Activated B cell treated with CpG ODN at 0.5 μM for 24 hours (primary cell): ENCODE measurements at regions of chr6 and their contacts with region 1.

Region 1: DNA sequence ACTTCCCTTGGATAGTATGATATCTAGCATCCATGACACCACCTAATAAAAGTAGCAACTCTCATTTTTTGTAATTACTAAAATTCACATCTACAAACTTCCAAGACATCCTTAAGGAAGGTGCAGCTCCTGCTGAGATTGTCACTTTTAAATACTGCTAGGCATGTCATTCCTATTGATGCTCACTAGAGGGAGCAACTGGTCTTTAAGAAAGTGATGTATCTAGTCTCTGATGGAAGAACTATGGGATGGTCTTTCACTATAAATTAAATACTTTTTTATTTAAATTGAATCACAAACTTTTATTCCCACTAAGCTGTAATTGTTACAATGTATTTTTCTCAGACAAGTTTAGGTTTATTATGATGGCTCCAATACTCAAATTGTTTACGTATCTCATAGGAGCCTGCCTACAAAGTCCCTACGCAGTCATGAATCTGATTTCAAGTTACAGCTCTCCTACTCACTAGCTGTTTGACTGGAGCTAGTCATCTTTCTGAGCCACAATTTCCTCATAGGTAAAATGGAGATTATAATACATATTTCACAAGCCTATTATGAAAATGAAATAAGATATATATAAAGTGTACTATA is 8.1 kb upstream of the TSPYL1 start:
- DNase-seq: no peak
- ATAC-seq: peak; percentile 88
- H3K4me3 Mint-ChIP-seq: no peak overlapping the region
- H3K27ac Mint-ChIP-seq: no peak overlapping the region
- H3K4me1 Mint-ChIP-seq: peaks cover 5% of the 10 kb centered on the region
- H3K27me3 Mint-ChIP-seq: no peaks in the 10 kb centered on the region
- CTCF ChIP-seq: peak; percentile 98

Region 2: GRCh38 chr6:116268589-116269293 is 19.0 kb before region 1 on chr6:
- CTCF ChIA-PET with region 1: interaction called, 16 read pairs
- POLR2A ChIA-PET with region 1: no interaction called
- intact Hi-C with region 1: no loop called
- DNase-seq: no peak
- ATAC-seq: peak; percentile 91
- H3K4me3 Mint-ChIP-seq: no peak overlapping the region
- H3K27ac Mint-ChIP-seq: no peak overlapping the region
- H3K4me1 Mint-ChIP-seq: peaks cover 17% of the 10 kb centered on the region
- H3K27me3 Mint-ChIP-seq: no peaks in the 10 kb centered on the region
- CTCF ChIP-seq: peak; percentile 28

Region 3: GRCh38 chr6:116314878-116315277 is 27.1 kb after region 1 on chr6:
- CTCF ChIA-PET with region 1: interaction called, 10 read pairs
- POLR2A ChIA-PET with region 1: no interaction called
- intact Hi-C with region 1: no loop called
- DNase-seq: no peak
- ATAC-seq: peak; percentile 82
- H3K4me3 Mint-ChIP-seq: no peak overlapping the region
- H3K27ac Mint-ChIP-seq: peak overlapping the region; percentile 72
- H3K4me1 Mint-ChIP-seq: peaks cover 24% of the 10 kb centered on the region
- H3K27me3 Mint-ChIP-seq: no peaks in the 10 kb centered on the region
- CTCF ChIP-seq: no peak

Region 4: GRCh38 chr6:116444092-116444491 is 156.3 kb after region 1 on chr6:
- CTCF ChIA-PET with region 1: interaction called, 33 read pairs
- POLR2A ChIA-PET with region 1: interaction called, 4 read pairs
- intact Hi-C with region 1: loop called (anchors 1 kb)
- DNase-seq: no peak
- ATAC-seq: peak; percentile 78
- H3K4me3 Mint-ChIP-seq: no peak overlapping the region
- H3K27ac Mint-ChIP-seq: no peak overlapping the region
- H3K4me1 Mint-ChIP-seq: peaks cover 26% of the 10 kb centered on the region
- H3K27me3 Mint-ChIP-seq: no peaks in the 10 kb centered on the region
- CTCF ChIP-seq: no peak

Region 5: DNA sequence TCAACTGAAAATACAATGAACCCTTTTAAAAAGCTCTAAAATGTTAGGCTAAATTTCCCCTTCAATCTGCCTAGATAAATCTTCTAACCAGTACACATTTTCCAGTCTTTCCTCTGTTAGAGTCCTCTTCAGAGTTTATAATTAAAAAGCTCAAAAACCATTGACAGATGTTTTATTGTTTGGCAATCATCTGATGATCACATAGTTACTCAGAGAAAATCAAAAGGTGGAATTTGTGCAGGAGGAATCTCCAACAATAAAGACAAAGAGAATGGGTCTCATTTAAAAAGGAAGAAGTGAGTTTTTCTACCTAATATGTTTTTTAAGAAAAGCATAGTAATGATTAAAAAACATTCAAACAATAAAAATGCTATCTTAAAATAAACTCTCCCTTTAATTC is 254.6 kb after region 1 on chr6:
- CTCF ChIA-PET with region 1: interaction called, 37 read pairs
- POLR2A ChIA-PET with region 1: no interaction called
- intact Hi-C with region 1: no loop called
- DNase-seq: no peak
- ATAC-seq: no peak
- H3K4me3 Mint-ChIP-seq: no peak overlapping the region
- H3K27ac Mint-ChIP-seq: no peak overlapping the region
- H3K4me1 Mint-ChIP-seq: no peaks in the 10 kb centered on the region
- H3K27me3 Mint-ChIP-seq: peaks cover 18% of the 10 kb centered on the region
- CTCF ChIP-seq: no peak

Region 6: DNA sequence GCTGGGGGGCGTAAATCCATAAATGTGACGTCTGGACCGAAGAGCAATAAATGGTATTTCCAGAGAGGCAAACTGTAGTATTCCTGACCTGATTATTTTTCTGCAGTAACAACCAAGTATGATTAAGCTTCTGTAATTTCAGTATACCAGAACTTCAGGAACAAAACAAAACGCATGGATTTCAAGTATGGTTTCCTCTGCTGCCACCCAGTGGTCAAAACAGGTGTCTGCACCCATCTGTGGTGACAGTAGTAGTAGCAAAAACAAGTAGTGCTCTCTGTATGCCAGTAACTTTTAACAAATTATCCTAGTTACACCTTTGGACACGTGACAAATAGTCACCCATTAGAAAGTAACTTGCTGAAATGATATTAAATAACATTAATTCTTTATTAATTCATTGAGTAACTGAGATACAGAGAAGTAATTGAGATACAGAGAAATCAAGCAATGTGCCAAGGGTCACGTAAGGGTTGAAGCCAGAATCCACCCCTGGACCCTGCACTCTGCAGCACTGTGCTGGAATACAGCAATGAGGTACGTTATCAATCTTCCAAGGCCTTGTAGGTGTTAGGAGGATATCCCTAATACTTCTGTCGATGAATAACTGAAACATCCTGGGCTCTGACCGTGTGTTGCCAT is 273.7 kb after region 1 on chr6:
- CTCF ChIA-PET with region 1: interaction called, 21 read pairs
- POLR2A ChIA-PET with region 1: no interaction called
- intact Hi-C with region 1: loop called (anchors 1 kb)
- DNase-seq: peak; percentile 37
- ATAC-seq: peak; percentile 81
- H3K4me3 Mint-ChIP-seq: no peak overlapping the region
- H3K27ac Mint-ChIP-seq: no peak overlapping the region
- H3K4me1 Mint-ChIP-seq: peaks cover 2% of the 10 kb centered on the region
- H3K27me3 Mint-ChIP-seq: peaks cover 14% of the 10 kb centered on the region
- CTCF ChIP-seq: peak; percentile 50

Region 7: GRCh38 chr6:116648156-116648555 is 360.4 kb after region 1 on chr6:
- CTCF ChIA-PET with region 1: no interaction called
- POLR2A ChIA-PET with region 1: no interaction called
- intact Hi-C with region 1: loop called (anchors 5 kb)
- DNase-seq: no peak
- ATAC-seq: no peak
- H3K4me3 Mint-ChIP-seq: no peak overlapping the region
- H3K27ac Mint-ChIP-seq: no peak overlapping the region
- H3K4me1 Mint-ChIP-seq: peaks cover 2% of the 10 kb centered on the region
- H3K27me3 Mint-ChIP-seq: no peaks in the 10 kb centered on the region
- CTCF ChIP-seq: no peak

Region 8: DNA sequence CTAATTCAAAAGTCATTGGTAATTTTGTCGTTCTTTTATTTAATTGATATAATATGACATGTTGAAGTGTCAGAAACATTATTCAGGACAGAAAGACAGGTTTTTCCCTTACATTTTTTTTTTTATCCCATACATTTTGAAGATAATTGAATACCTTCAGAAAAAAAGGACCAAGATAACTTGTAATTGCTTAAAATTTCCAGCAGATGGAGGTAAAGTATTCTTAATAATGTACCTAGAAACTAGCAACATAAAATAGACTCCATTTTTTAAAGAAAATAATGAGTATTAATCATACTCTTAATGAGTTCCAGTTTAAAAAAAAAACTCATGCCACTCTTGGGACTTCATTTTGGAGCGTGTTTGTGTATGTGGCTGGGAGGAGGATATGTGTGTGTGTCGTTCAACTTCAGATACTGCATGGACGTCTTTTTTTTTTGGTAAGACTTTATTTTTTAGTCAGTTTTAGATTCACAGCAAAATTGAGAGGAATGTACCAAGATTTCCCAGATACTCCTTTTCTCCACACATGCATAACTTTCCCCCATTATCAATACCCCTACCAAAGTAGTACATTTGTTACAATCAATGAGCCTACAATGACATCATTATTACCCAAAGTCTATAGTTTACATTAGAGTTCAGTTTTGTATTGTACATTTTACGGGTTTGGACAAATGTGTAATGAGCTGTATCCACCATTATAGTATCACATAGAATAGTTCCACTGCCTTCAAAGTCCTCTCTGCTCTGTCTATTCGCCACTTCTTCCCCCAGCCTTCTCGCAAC is 1058.5 kb after region 1 on chr6:
- CTCF ChIA-PET with region 1: no interaction called
- POLR2A ChIA-PET with region 1: no interaction called
- intact Hi-C with region 1: no loop called
- DNase-seq: no peak
- ATAC-seq: no peak
- H3K4me3 Mint-ChIP-seq: no peak overlapping the region
- H3K27ac Mint-ChIP-seq: no peak overlapping the region
- H3K4me1 Mint-ChIP-seq: no peaks in the 10 kb centered on the region
- H3K27me3 Mint-ChIP-seq: peaks cover 1% of the 10 kb centered on the region
- CTCF ChIP-seq: no peak